Thyroid gland (tissue), 4 donors: ENCODE measurements at regions of chr6 and their contacts with region 1.

Region 1: DNA sequence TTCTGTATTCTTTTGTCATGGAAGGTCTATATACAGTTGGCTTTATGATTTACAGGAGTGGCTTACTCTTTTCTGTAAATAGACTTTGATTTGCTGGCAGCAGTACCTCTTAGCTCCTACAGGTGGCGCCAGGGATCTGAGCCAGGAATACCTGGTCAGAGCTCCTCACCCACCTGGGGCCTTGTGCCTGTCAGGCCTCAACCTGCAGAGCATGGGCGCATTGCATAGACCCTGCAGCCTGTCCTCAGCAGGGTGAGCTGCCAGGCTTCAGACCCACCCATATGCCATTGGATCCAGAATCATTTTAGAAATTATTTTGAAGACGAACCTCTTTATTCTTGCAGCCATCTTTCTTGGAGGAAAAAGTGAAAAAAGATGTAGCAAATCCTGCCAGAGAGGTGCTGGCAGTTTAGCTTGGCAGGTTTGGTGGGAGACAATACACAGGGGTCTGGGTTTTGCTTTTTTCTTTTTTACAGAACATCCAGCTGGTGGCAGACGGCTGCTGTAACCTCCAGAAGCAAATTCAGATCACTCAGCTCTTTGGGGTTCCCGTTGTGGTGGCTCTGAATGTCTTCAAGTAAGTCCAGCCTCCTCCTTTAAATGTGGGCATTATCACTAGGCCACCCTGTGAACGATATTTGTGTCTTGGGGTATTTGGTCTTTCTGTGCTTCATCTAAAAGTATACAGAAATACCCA is 149.1 kb downstream of the MTHFD1L start:
- DNase-seq: peak; percentile 66 to 73
- H3K4me3 ChIP-seq: no peak overlapping the region
- H3K27ac ChIP-seq: no peak overlapping the region
- H3K4me1 ChIP-seq: peaks cover 6 to 13% of the 10 kb centered on the region in 2 donors
- H3K27me3 ChIP-seq: no peaks in the 10 kb centered on the region
- CTCF ChIP-seq: peak; percentile 97 to 99 (median 98)
- POLR2A ChIP-seq: no peak

Region 2: GRCh38 chr6:150891888-150892485 is 122.6 kb before region 1 on chr6:
- intact Hi-C with region 1: loop called (anchors 5 kb)
- DNase-seq: peak; percentile 79 to 82
- H3K4me3 ChIP-seq: no peak overlapping the region
- H3K27ac ChIP-seq: peak overlapping the region in 1 of 3 donors; percentile 29
- H3K4me1 ChIP-seq: peaks cover 13 to 14% of the 10 kb centered on the region in 2 donors
- H3K27me3 ChIP-seq: no peaks in the 10 kb centered on the region
- CTCF ChIP-seq: peak in 5 of 6 experiments; percentile 64 to 93 (median 89)
- POLR2A ChIP-seq: no peak

Region 3: DNA sequence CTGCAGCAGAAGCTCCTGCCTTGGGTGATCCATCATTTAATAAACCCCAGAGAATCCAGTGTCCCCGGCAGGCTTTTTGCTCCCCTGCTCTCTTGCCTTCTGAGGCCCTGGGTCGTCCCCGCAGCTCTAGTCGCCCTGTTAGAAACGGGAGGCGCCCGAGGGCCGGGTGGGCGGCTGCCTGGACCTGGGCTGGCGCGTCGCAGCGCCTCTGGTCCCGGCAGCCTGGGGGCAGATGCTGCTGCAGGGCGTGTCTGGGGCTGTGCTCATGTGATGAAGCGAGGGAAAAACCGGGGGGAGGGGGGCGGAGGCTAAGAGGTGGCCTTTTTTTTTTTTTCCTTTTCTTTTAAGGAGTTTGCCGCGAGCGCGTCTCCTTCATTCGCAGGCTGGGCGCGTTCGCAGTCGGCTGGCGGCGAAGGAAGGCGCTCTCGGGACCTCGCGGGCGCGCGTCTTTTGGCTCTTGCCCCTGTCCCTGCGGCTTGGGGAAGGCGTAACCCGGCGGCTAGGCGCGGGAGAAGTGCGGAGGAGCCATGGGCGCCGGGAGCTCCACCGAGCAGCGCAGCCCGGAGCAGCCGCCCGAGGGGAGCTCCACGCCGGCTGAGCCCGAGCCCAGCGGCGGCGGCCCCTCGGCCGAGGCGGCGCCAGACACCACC is 225.6 kb after region 1 on chr6:
- intact Hi-C with region 1: loop called (anchors 10 kb)
- DNase-seq: peak; percentile 82 to 83
- H3K4me3 ChIP-seq: peak overlapping the region; percentile 57 to 80 (median 72)
- H3K27ac ChIP-seq: peak overlapping the region; percentile 66 to 85 (median 76)
- H3K4me1 ChIP-seq: peaks cover 15 to 20% of the 10 kb centered on the region in 2 donors
- H3K27me3 ChIP-seq: no peaks in the 10 kb centered on the region
- CTCF ChIP-seq: no peak
- POLR2A ChIP-seq: peak in 1 of 2 donors; percentile 51